Calu3 (cell line): ENCODE measurements at regions of chr1 and their contacts with region 1.

Region 1: GRCh38 chr1:209565759-209566678 is 17.5 kb upstream of the CAMK1G start:
- DNase-seq: peak; percentile 90
- H3K4me3 Mint-ChIP-seq: no peak overlapping the region
- H3K27ac Mint-ChIP-seq: no peak overlapping the region
- H3K4me1 Mint-ChIP-seq: peaks cover 9% of the 10 kb centered on the region
- H3K27me3 Mint-ChIP-seq: peaks cover 95% of the 10 kb centered on the region
- CTCF ChIP-seq: peak; percentile 87

Region 2: GRCh38 chr1:209113521-209113920 is 452.5 kb before region 1 on chr1:
- CTCF ChIA-PET with region 1: no interaction called
- intact Hi-C with region 1: no loop called
- DNase-seq: no peak
- H3K4me3 Mint-ChIP-seq: no peak overlapping the region
- H3K27ac Mint-ChIP-seq: no peak overlapping the region
- H3K4me1 Mint-ChIP-seq: no peaks in the 10 kb centered on the region
- H3K27me3 Mint-ChIP-seq: peaks cover 48% of the 10 kb centered on the region
- CTCF ChIP-seq: no peak

Region 3: DNA sequence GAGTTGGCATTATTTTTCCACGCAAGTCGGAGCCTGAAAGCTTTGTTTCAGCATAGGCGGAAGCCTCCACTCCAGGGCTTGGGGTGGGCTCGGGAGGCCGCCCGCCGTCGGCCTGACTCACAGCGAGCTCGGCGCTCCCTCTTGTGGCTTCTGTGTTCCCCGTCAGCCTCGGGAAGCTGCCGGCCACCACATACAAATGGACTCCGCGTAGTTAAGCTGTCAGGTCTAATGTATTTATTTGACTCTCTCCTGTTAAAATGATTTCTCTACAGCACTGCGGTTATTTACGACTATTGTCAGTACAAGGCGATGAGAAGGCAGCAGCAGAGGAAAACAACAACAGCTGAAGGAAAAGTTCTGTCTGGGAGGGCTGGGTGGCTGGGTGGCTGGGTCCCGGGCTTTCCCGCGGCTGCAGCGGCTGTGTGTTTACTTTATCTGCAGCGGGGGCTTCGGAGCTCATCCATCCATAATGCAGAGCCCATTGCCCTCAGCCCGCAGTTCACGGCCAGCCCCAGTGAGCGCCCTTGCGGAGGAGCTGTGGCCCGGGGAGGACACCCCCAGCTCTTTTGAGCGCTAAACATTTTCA is 358.2 kb before region 1 on chr1:
- CTCF ChIA-PET with region 1: interaction called, 4 read pairs
- intact Hi-C with region 1: loop called (anchors 1 kb)
- DNase-seq: peak; percentile 55
- H3K4me3 Mint-ChIP-seq: no peak overlapping the region
- H3K27ac Mint-ChIP-seq: no peak overlapping the region
- H3K4me1 Mint-ChIP-seq: no peaks in the 10 kb centered on the region
- H3K27me3 Mint-ChIP-seq: peaks cover 91% of the 10 kb centered on the region
- CTCF ChIP-seq: peak; percentile 58

Region 4: GRCh38 chr1:209354111-209354839 is 211.7 kb before region 1 on chr1:
- CTCF ChIA-PET with region 1: no interaction called
- intact Hi-C with region 1: loop called (anchors 5 kb)
- DNase-seq: peak; percentile 82
- H3K4me3 Mint-ChIP-seq: no peak overlapping the region
- H3K27ac Mint-ChIP-seq: no peak overlapping the region
- H3K4me1 Mint-ChIP-seq: peaks cover 7% of the 10 kb centered on the region
- H3K27me3 Mint-ChIP-seq: no peaks in the 10 kb centered on the region
- CTCF ChIP-seq: peak; percentile 84

Region 5: GRCh38 chr1:209490013-209490412 is 76.0 kb before region 1 on chr1:
- CTCF ChIA-PET with region 1: interaction called, 5 read pairs
- intact Hi-C with region 1: loop called (anchors 2 kb)
- DNase-seq: no peak
- H3K4me3 Mint-ChIP-seq: no peak overlapping the region
- H3K27ac Mint-ChIP-seq: no peak overlapping the region
- H3K4me1 Mint-ChIP-seq: no peaks in the 10 kb centered on the region
- H3K27me3 Mint-ChIP-seq: peaks cover 24% of the 10 kb centered on the region
- CTCF ChIP-seq: no peak

Region 6: DNA sequence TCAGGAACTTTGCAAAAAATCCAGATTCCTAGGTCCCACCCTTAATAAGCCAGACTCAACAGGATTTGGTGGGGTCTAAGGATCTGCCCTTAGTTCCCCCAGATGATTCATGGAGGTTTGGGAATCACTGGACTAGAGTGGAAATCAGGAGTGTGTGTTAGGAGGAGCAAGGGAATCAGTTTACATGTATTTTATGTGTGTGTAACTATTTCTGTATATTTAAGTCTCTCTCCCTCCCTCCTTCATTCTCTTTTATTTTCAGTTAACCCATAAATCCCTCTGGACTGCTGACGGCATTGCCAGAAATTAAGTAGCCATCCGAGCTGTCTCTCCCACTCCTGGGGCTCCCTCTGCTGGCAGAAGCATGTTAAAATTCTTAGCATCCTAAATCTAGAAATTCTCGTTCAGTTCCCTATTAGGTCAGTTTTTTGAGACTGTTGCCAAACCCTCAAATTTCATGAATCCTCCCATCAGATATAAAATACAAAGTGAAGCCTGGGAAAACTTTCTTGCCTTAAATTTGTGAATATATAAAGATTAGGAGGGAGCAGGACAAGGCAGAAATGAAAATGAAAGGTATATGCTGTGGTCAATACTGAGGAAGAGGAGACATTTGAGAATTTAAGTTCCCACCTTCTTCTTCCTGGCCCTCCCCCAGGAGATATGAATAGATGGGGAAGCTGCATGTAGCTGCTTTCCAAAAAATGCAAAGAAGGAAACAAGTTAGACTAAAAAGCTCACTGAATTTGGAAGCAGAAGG is 126.9 kb after region 1 on chr1:
- CTCF ChIA-PET with region 1: interaction called, 10 read pairs
- intact Hi-C with region 1: loop called (anchors 2 kb)
- DNase-seq: peak; percentile 90
- H3K4me3 Mint-ChIP-seq: no peak overlapping the region
- H3K27ac Mint-ChIP-seq: peak overlapping the region; percentile 76
- H3K4me1 Mint-ChIP-seq: peaks cover 35% of the 10 kb centered on the region
- H3K27me3 Mint-ChIP-seq: peaks cover 20% of the 10 kb centered on the region
- CTCF ChIP-seq: peak; percentile 81